Posterior cingulate gyrus (tissue), 11 donors: ENCODE measurements at regions of chr21 and their contacts with region 1.

Region 1: DNA sequence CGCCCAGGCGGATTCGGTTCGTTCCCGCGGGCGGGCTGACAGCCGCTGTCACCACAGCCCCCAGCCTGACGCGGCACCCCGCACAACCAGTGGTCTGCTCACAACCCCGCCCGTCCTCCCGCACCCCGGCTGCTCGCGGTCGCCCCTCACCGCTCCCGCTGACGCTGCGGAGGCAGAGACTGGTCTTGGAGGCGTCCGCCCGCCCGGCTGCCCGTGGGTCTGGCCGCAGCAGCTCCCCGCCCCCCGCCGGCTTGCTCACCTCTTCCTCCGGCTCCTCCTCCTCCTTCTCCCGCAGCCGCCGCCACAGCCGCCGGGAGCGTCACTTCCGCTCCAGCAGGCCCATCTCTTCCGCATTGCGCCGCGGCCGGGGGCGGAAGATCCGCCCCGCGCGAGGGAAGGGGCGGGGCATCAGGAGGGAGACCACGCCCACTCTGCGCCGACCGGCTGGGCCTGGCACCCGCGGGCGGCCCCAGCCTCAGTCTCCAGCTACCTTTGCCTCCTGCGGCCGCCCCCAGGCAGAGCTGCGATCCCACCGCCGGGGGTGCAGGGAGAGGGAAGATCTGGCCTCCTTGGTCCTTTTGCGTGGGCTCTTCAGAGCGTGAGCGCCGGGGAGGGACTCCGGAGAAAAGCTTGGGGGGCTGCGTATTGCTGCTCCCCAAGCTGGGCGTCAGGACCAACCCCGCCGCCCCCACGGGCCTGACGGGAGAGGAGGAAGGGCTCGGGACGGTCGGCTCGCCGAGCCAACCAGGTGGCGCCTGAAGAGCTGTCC is at the start of gene SYNJ1:
- DNase-seq: peak; percentile 88 to 99 (median 95)

Region 2: GRCh38 chr21:32641710-32642698 is 85.9 kb before region 1 on chr21:
- intact Hi-C with region 1: loop called (anchors 10 kb)
- DNase-seq: no peak

Region 3: GRCh38 chr21:32770871-32771523 is 43.1 kb after region 1 on chr21:
- intact Hi-C with region 1: loop called (anchors 2 kb)
- DNase-seq: peak in 8 of 10 donors; percentile 18 to 84 (median 35)